Right lobe of liver (tissue), 6 donors: ENCODE measurements at regions of chr20 and their contacts with region 1.

Region 1: GRCh38 chr20:44080646-44081267 is 106.2 kb downstream of the JPH2 start:
- DNase-seq: peak in 2 of 3 donors; percentile 50 to 77
- ATAC-seq: peak; percentile 94 to 99 (median 97)
- H3K4me3 ChIP-seq: no peak overlapping the region
- H3K27ac ChIP-seq: no peak overlapping the region
- H3K4me1 ChIP-seq: no peaks in the 10 kb centered on the region
- H3K27me3 ChIP-seq: no peaks in the 10 kb centered on the region
- CTCF ChIP-seq: peak; percentile 99
- POLR2A ChIP-seq: no peak

Region 2: GRCh38 chr20:43448748-43449535 is 631.8 kb before region 1 on chr20:
- intact Hi-C with region 1: loop called in 1 of 2 experiments (anchors 5 kb)
- DNase-seq: peak in 1 of 3 donors; percentile 27
- ATAC-seq: peak; percentile 79 to 86 (median 83)
- H3K4me3 ChIP-seq: no peak overlapping the region
- H3K27ac ChIP-seq: no peak overlapping the region
- H3K4me1 ChIP-seq: peaks cover 0 to 13% (median 4%) of the 10 kb centered on the region in 4 donors
- H3K27me3 ChIP-seq: no peaks in the 10 kb centered on the region
- CTCF ChIP-seq: peak; percentile 69 to 78 (median 72)
- POLR2A ChIP-seq: no peak

Region 3: GRCh38 chr20:43749734-43750294 is 330.9 kb before region 1 on chr20:
- intact Hi-C with region 1: loop called (anchors 5 kb)
- DNase-seq: peak; percentile 81 to 85 (median 83)
- ATAC-seq: peak; percentile 93 to 97 (median 94)
- H3K4me3 ChIP-seq: no peak overlapping the region
- H3K27ac ChIP-seq: no peak overlapping the region
- H3K4me1 ChIP-seq: no peaks in the 10 kb centered on the region
- H3K27me3 ChIP-seq: no peaks in the 10 kb centered on the region
- CTCF ChIP-seq: peak; percentile 98 to 100 (median 100)
- POLR2A ChIP-seq: no peak

Region 4: GRCh38 chr20:43878776-43879175 is 202.0 kb before region 1 on chr20:
- intact Hi-C with region 1: no loop called
- DNase-seq: no peak
- ATAC-seq: no peak
- H3K4me3 ChIP-seq: no peak overlapping the region
- H3K27ac ChIP-seq: no peak overlapping the region
- H3K4me1 ChIP-seq: no peaks in the 10 kb centered on the region
- H3K27me3 ChIP-seq: no peaks in the 10 kb centered on the region
- CTCF ChIP-seq: no peak
- POLR2A ChIP-seq: no peak

Region 5: DNA sequence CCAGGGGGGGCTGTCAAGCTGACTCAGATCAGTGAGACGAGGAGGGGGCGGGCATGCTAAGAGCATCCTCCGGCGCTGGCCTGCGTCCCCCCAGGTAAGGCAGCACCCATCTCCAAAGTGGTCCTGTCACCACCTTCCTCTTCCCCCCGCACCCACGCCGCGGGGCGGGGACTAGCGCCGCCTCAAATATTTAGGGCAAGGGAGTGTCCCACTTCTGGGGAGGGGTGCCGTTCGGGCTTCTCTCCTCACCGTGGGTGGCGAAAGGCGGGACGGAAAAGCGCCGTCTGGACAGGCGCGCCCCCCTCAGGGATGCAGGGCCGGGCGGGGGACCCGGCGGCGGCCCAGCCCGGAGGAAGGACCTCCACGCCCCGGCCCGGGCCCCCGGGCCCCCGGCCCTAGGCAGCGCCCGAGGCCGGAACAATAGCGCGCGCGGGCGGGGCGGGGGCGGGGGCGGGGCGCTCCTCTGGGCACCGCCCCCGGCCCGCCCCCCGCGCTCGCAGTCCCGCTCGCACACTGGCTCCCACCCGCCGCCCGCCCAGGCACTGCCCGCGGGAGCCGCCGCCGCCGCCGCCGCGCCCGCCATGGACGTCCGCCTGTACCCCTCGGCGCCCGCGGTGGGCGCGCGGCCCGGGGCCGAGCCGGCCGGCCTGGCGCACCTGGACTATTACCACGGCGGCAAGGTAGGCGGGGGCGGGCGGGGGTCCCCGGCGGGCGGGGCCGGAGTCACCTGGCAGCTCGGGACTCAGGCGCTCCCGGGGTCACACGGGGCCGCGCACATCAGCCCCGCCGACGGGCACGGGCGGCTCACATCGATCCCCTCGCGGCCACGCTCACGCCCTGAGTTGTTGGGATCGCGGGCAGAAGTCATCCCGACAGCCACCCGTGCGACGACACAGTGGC is 166.2 kb before region 1 on chr20 and contains the start of gene TOX2:
- intact Hi-C with region 1: no loop called
- DNase-seq: peak in 1 of 3 donors; percentile 75
- ATAC-seq: peak; percentile 60 to 77 (median 70)
- H3K4me3 ChIP-seq: peak within 1 kb of the TSS; percentile 37 to 49 (median 44)
- H3K27ac ChIP-seq: peak within 1 kb of the TSS; percentile 15 to 60 (median 24)
- H3K4me1 ChIP-seq: no peaks in the 10 kb centered on the region
- H3K27me3 ChIP-seq: peaks cover 0 to 10% of the 10 kb centered on the region in 2 donors
- CTCF ChIP-seq: no peak
- POLR2A ChIP-seq: no peak
- total RNA-seq, gene TOX2: 1.5 to 5.0 (median 2.2) TPM

Region 6: GRCh38 chr20:43955062-43955749 is 125.6 kb before region 1 on chr20:
- intact Hi-C with region 1: no loop called
- DNase-seq: no peak
- ATAC-seq: peak in 3 of 4 donors; percentile 12 to 54 (median 30)
- H3K4me3 ChIP-seq: no peak overlapping the region
- H3K27ac ChIP-seq: no peak overlapping the region
- H3K4me1 ChIP-seq: peaks cover 0 to 47% (median 19%) of the 10 kb centered on the region in 4 donors
- H3K27me3 ChIP-seq: no peaks in the 10 kb centered on the region
- CTCF ChIP-seq: no peak
- POLR2A ChIP-seq: no peak